A673 (cell line): ENCODE measurements at regions of chr11 and their contacts with region 1.

Region 1: DNA sequence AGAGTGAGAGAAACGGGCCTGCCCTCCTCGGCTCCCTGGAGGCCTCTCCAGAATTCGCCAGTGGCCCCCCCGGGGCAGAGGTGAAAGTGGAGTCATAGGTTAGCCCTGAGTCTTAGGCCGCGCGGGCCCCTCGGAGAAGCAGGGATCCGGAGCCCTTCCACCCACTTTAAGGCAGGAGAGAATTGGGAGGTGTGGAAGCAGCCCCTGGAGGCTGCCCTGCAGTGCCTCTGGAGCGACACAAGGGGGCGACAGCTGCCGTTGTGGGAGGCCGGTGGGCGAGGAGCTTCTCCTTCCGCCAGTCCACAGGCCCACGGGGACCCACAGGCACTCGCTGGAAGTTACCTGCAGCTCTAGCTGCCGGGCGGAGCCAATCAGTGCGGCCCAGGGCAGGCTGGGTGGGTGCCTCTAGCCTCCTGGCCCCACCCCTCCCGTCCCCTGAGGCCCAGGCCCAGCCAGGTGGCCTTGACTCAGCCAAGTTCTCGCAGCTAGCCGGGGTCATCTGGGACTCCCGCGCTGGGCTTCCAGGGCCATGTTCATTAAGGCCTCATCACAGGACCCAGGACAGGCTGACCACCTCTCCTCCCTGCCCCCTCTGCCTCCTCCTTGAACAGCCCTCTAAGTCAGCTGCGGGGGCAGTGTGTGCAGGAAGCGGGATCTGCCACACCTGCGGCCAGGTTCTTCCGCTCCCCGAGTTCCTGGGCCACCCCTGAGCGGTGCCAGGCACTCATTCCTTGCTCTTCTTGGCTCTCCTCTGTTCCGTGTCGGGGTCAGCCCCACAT is 5.0 kb downstream of the DGKZ start:
- DNase-seq: peak; percentile 88
- H3K4me3 ChIP-seq: no peak overlapping the region
- H3K27ac ChIP-seq: peak overlapping the region; percentile 45
- H3K4me1 ChIP-seq: peaks cover 59% of the 10 kb centered on the region
- H3K27me3 ChIP-seq: no peaks in the 10 kb centered on the region
- CTCF ChIP-seq: peak; percentile 100

Region 2: GRCh38 chr11:46369458-46370152 is 17.4 kb after region 1 on chr11:
- CTCF ChIA-PET with region 1: interaction called, 13 read pairs
- POLR2A ChIA-PET with region 1: interaction called, 3 read pairs
- intact Hi-C with region 1: no loop called
- DNase-seq: peak; percentile 96
- H3K4me3 ChIP-seq: no peak overlapping the region
- H3K27ac ChIP-seq: no peak overlapping the region
- H3K4me1 ChIP-seq: peaks cover 13% of the 10 kb centered on the region
- H3K27me3 ChIP-seq: no peaks in the 10 kb centered on the region
- CTCF ChIP-seq: peak; percentile 100